GM10248 (cell line): ENCODE measurements at regions of chr4 and their contacts with region 1.

Region 1: DNA sequence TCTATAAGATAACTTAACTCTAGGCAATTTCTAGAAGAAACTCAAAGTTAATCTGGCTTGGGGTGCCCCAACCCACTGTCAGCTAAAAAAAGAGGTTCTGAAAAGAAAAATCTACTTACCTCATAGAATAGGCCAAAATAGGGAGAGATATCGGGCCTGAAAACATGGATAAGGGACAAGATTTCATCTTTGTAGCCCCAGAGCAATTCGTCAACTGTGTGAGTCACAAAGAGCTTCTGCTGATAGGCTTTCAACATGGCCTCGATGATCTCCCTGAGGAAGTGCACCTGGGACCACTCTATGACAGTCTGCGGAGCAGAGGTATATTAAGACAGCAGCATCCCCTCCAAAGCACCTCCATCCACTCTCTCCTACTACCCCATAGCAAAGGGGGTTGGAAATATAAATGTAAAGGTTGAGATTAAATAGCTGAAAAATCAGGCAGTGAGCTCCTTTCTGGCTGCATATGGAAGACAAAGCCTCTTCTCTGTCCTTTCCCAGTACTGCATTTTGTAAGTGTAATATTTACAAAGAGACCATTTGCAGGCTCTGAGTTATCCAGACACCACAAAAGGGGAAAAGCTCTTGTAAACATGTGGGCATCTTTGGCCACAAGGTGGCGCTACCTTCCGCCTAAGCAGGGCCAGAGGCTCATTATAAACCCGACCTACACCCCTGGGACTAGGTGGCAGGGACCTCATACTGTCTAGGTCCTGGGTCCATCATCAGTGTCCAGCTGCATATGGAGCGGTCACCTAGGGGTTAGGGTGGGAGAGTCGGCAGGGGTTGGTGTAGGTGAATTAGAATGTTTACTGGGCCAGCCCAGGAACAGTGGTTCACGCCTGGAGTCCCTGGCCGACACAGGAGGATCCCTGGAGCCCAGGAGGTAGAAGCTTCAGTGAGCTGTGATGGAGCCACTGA is 31.5 kb upstream of the NUP54 start:
- DNase-seq: peak; percentile 77
- CTCF ChIP-seq: peak; percentile 85

Region 2: DNA sequence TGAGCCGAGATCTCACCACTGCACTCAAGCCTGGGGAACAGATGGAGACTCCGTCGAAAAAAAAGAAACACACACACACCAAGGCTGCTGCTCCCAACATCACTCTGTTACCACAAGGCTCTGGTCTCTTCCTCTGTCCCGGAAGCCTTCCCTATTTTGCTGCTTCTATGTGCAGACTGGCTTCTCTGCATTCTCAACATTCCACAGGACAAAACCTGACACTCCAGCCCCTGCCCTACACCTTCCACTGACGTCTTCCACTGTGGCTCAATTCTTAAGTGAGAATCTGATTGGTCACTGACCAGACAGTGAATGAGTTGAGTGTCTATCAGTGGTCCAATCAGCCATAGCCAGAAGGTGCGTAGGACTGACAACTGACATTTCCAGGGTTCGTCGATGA is 617.9 kb before region 1 on chr4:
- CTCF ChIA-PET with region 1: no interaction called
- POLR2A ChIA-PET with region 1: no interaction called
- DNase-seq: no peak
- CTCF ChIP-seq: no peak

Region 3: DNA sequence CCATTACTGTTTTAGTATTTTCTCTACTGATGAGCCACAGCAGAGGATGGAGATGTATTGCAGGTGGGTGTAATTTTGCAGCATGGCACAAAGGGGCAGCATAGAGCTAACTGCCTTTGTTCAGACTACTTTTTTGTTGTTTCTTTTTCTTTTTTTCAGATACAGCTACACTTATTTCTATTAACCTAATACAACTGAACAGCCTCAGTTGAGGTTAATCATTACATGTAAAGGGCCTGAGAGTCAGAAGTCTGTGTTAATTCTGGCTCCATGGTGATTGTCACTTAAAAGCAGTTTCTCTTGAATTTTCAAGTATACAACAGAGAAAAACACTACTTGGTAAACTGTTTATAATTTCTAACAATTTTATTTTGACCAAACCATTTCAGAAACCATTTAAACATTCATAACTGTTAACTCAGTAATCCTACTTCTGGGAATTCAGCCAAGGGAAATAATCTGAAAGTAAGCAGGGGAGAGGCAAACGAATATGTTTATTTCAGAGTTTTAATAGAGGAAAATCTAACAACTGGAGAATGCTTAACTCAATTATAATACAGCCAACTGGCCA is 263.5 kb before region 1 on chr4:
- CTCF ChIA-PET with region 1: interaction called, 10 read pairs
- POLR2A ChIA-PET with region 1: no interaction called
- DNase-seq: peak; percentile 65
- CTCF ChIP-seq: peak; percentile 73

Region 4: GRCh38 chr4:75973766-75974165 is 205.9 kb before region 1 on chr4:
- CTCF ChIA-PET with region 1: no interaction called
- POLR2A ChIA-PET with region 1: no interaction called
- DNase-seq: no peak
- CTCF ChIP-seq: no peak

Region 5: GRCh38 chr4:76166480-76166879 is 13.2 kb before region 1 on chr4:
- CTCF ChIA-PET with region 1: interaction called, 20 read pairs
- POLR2A ChIA-PET with region 1: interaction called, 5 read pairs
- DNase-seq: no peak
- CTCF ChIP-seq: no peak

Region 6: GRCh38 chr4:76213415-76214176 is 33.9 kb after region 1 on chr4 and contains the start of gene SCARB2:
- CTCF ChIA-PET with region 1: interaction called, 32 read pairs
- POLR2A ChIA-PET with region 1: no interaction called
- DNase-seq: peak; percentile 81
- CTCF ChIP-seq: no peak

Region 7: DNA sequence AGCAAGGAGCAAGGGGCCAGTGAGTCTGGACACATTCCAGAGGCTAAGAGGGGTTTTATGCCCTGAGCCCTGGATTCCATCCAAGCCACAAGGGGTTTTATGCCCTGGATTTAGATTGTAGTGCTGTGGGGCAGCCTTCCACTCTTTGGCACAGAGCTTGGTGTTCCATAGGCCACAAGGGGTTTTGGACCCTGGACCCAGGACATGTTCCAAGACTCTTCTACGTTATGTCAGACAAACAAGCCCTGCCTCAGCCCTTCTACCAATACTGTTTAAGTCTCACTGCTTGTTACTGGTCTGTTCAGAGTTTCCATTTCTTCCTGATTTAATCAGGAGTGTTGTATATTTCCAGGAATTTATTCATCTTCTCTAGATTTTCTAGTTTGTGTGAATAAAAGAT is 46.8 kb after region 1 on chr4:
- CTCF ChIA-PET with region 1: no interaction called
- POLR2A ChIA-PET with region 1: no interaction called
- DNase-seq: no peak
- CTCF ChIP-seq: no peak

Region 8: GRCh38 chr4:76499461-76499860 is 319.8 kb after region 1 on chr4:
- CTCF ChIA-PET with region 1: interaction called, 48 read pairs
- POLR2A ChIA-PET with region 1: no interaction called
- DNase-seq: peak; percentile 44
- CTCF ChIP-seq: no peak